ENCODE measurements at regions of chr2 and their contacts with region 1.

Region 1: GRCh38 chr2:232236200-232236599 is 142.4 kb upstream of the ALPP start:
- DNase-seq: no peak
- H3K4me3 ChIP-seq: no peak overlapping the region
- H3K4me3 Mint-ChIP-seq: no peak overlapping the region
- H3K27ac Mint-ChIP-seq: no peak overlapping the region
- H3K4me1 ChIP-seq: peaks cover 4% of the 10 kb centered on the region
- H3K4me1 Mint-ChIP-seq: peaks cover 10% of the 10 kb centered on the region
- H3K27me3 ChIP-seq: no peaks in the 10 kb centered on the region
- H3K27me3 Mint-ChIP-seq: no peaks in the 10 kb centered on the region
- CTCF ChIP-seq: no peak

Region 2: GRCh38 chr2:232300894-232301387 is 64.7 kb after region 1 on chr2:
- CTCF ChIA-PET with region 1: no interaction called
- POLR2A ChIA-PET with region 1: no interaction called
- intact Hi-C with region 1: loop called (anchors 5 kb)
- DNase-seq: peak; percentile 39 to 55
- H3K4me3 ChIP-seq: no peak overlapping the region
- H3K4me3 Mint-ChIP-seq: no peak overlapping the region
- H3K27ac Mint-ChIP-seq: no peak overlapping the region
- H3K4me1 ChIP-seq: peaks cover 10% of the 10 kb centered on the region
- H3K4me1 Mint-ChIP-seq: no peaks in the 10 kb centered on the region
- H3K27me3 ChIP-seq: no peaks in the 10 kb centered on the region
- H3K27me3 Mint-ChIP-seq: no peaks in the 10 kb centered on the region
- CTCF ChIP-seq: peak in 1 of 2 experiments; percentile 17

Measured in Caco-2 (cell line).